ENCODE measurements at regions of chr7 and their contacts with region 1.

Region 1: DNA sequence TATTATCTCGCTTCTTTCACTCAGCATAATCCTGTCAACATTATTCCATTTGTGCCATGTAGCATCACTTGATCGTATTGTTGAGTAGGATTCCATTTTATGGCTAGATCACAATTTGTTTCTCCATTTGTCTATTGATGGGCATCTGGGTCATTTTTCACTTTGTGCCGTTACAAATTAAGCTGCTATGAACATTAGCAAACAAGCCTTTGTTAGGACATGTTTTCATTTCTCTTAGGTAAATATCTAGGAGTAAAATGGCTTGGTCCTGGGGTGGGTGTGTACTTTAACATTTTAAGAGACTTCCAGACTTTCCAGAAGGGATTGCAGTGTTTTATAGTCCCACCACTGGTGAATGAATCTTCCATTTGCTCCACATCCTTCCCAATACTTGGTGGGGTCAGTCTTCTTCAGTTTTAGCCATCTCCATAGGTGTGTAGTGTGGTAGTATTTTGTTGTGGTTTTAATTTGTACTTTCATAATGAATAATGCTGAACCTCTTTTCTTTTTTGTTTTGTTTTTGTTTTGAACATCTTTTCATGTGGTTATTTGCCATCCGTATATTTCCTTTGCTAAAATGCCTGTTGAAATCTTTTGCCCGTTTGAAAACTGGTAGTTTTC is 86.2 kb downstream of the ANKRD61 start:
- DNase-seq: no peak
- ATAC-seq: no peak
- H3K4me3 ChIP-seq: no peak overlapping the region
- H3K4me3 Mint-ChIP-seq: no peak overlapping the region
- H3K27ac ChIP-seq: no peak overlapping the region
- H3K27ac Mint-ChIP-seq: peak overlapping the region; percentile 70 to 79
- H3K4me1 ChIP-seq: no peaks in the 10 kb centered on the region
- H3K4me1 Mint-ChIP-seq: peaks cover 14 to 28% (median 17%) of the 10 kb centered on the region in 3 donors
- H3K27me3 ChIP-seq: no peaks in the 10 kb centered on the region
- H3K27me3 Mint-ChIP-seq: no peaks in the 10 kb centered on the region

Region 2: GRCh38 chr7:6008668-6009611 is 108.5 kb before region 1 on chr7 and contains the starts of genes AIMP2 and PMS2:
- CTCF ChIA-PET with region 1: no interaction called
- POLR2A ChIA-PET with region 1: interaction called in 1 of 2 experiments, 11 read pairs
- DNase-seq: peak; percentile 87 to 97 (median 93)
- ATAC-seq: peak; percentile 85 to 90 (median 88)
- H3K4me3 ChIP-seq: peak within 1 kb of the TSS; percentile 88 to 99
- H3K4me3 Mint-ChIP-seq: peak within 1 kb of the TSS; percentile 90 to 95 (median 92)
- H3K27ac ChIP-seq: peak within 1 kb of the TSS; percentile 83
- H3K27ac Mint-ChIP-seq: peak within 1 kb of the TSS; percentile 86 to 94
- H3K4me1 ChIP-seq: peaks cover 9 to 17% of the 10 kb centered on the region in 2 experiments
- H3K4me1 Mint-ChIP-seq: peaks cover 31 to 46% (median 33%) of the 10 kb centered on the region in 3 donors
- H3K27me3 ChIP-seq: no peaks in the 10 kb centered on the region
- H3K27me3 Mint-ChIP-seq: no peaks in the 10 kb centered on the region
- total RNA-seq, gene AIMP2: 7.8 to 17.4 (median 14.1) TPM
- total RNA-seq, gene PMS2: 13.5 to 21.0 (median 20.0) TPM

Region 3: DNA sequence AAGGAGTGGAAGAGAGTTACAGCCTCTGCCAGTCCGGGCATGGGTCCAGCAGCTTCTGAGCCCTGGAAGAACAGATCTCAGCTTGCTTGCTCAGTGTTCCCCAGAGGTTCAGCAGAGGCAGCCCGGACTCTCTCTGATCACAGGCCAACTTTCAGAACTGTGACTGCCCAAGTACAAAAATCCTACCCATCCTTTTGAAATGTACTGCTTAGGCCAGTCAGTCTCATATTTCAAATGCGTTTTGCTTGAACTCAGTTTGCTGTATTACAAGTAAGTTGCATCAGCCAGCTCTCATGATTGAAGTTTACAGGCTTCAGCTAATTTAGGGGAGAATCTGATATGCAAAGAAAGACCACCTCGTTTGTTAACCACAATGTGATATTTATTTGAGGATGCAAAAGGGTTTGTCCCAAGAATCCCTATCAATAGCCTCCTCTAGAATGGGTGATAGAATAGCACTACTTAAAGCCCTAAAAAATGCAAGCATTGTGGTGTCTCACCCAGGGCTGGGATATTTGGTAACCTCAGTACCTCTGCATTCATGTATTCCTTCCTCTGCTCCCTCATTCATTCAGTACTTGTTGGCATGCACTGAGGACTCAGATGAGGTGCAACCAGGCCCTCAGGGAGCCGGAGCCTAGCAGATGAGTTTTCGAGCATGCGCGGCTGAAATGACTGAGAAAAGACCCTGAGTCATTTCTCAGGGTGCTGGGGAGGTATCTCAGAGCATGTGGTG is 101.3 kb before region 1 on chr7:
- CTCF ChIA-PET with region 1: interaction called in 1 of 2 experiments, 10 read pairs
- POLR2A ChIA-PET with region 1: no interaction called
- DNase-seq: no peak
- ATAC-seq: no peak
- H3K4me3 ChIP-seq: no peak overlapping the region
- H3K4me3 Mint-ChIP-seq: no peak overlapping the region
- H3K27ac ChIP-seq: no peak overlapping the region
- H3K27ac Mint-ChIP-seq: peak overlapping the region in 1 of 2 donors; percentile 44
- H3K4me1 ChIP-seq: no peaks in the 10 kb centered on the region
- H3K4me1 Mint-ChIP-seq: peaks cover 11 to 18% (median 14%) of the 10 kb centered on the region in 3 donors
- H3K27me3 ChIP-seq: no peaks in the 10 kb centered on the region
- H3K27me3 Mint-ChIP-seq: no peaks in the 10 kb centered on the region

Region 4: DNA sequence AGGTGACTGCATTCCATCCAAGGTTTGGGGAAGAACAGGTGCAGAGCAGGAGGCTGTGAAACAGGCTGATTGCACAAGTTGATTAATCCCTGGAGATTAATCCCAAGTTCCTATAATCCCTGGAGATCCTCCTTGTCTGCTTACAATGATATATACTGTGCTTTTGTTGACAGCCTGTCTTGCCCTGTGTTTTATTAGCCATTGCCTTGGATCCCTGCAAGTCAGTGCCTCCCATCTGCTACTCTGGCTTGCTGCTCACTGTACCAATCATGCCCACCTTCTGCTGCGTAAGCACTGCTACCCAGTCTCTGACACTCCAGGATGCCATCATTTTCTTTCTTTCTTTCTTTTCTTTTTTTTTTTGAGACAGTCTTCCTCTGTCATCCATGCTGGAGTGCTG is 20.8 kb before region 1 on chr7:
- CTCF ChIA-PET with region 1: no interaction called
- POLR2A ChIA-PET with region 1: interaction called in 1 of 2 experiments, 14 read pairs
- DNase-seq: no peak
- ATAC-seq: no peak
- H3K4me3 ChIP-seq: no peak overlapping the region
- H3K4me3 Mint-ChIP-seq: no peak overlapping the region
- H3K27ac ChIP-seq: no peak overlapping the region
- H3K27ac Mint-ChIP-seq: no peak overlapping the region
- H3K4me1 ChIP-seq: no peaks in the 10 kb centered on the region
- H3K4me1 Mint-ChIP-seq: no peaks in the 10 kb centered on the region
- H3K27me3 ChIP-seq: peaks cover 0 to 27% of the 10 kb centered on the region in 2 experiments
- H3K27me3 Mint-ChIP-seq: peaks cover 19 to 32% of the 10 kb centered on the region in 2 donors

Region 5: DNA sequence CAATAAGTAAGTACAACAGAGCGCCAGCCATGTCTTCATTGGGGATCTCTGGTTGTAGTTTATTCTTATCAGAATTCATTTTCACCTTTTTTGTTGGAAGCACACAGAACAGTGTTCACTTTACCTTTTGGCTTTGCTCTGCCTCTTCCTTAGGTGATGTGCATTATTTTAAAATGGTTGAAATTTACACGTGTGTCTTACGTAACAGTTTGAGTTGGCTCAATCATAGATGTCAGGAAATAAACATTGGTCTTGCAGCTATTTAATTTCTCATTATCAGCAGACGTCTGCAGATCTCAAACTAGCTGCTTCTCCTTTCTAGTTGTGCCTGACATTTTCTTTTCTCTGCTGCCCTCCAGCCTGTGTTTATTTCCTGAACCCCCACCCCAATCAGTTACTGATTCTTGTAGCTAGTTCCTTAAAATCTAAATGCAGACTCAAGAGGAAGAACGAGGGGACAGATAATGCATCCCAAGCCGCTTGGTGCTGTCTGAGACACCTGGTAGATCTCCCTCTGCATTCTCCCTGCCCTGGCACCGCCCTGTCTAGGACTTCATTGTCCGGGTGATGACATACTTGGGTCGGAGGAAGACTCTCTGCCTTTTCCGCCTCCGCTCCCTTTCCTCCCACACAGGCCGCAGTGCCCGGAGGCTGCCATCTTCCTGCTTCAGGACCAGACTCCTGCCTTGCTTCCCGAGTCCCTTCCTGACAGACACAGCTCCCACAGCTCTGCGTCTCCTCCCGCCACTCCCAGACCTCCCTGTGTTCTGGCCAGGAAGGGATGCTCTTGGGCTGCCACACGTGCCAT is 22.0 kb after region 1 on chr7:
- CTCF ChIA-PET with region 1: no interaction called
- POLR2A ChIA-PET with region 1: interaction called in 1 of 2 experiments, 11 read pairs
- DNase-seq: no peak
- ATAC-seq: no peak
- H3K4me3 ChIP-seq: no peak overlapping the region
- H3K4me3 Mint-ChIP-seq: no peak overlapping the region
- H3K27ac ChIP-seq: no peak overlapping the region
- H3K27ac Mint-ChIP-seq: peak overlapping the region in 1 of 2 donors; percentile 17
- H3K4me1 ChIP-seq: no peaks in the 10 kb centered on the region
- H3K4me1 Mint-ChIP-seq: peaks cover 0 to 6% (median 2%) of the 10 kb centered on the region in 3 donors
- H3K27me3 ChIP-seq: no peaks in the 10 kb centered on the region
- H3K27me3 Mint-ChIP-seq: no peaks in the 10 kb centered on the region

Region 6: GRCh38 chr7:6228361-6229229 is 111.2 kb after region 1 on chr7:
- CTCF ChIA-PET with region 1: no interaction called
- POLR2A ChIA-PET with region 1: no interaction called
- DNase-seq: peak in 1 of 35 experiments; percentile 7
- ATAC-seq: peak in 2 of 4 experiments; percentile 42 to 69
- H3K4me3 ChIP-seq: no peak overlapping the region
- H3K4me3 Mint-ChIP-seq: peak overlapping the region in 1 of 3 donors; percentile 26
- H3K27ac ChIP-seq: no peak overlapping the region
- H3K27ac Mint-ChIP-seq: no peak overlapping the region
- H3K4me1 ChIP-seq: peaks cover 0 to 10% of the 10 kb centered on the region in 2 experiments
- H3K4me1 Mint-ChIP-seq: peaks cover 34 to 45% (median 37%) of the 10 kb centered on the region in 3 donors
- H3K27me3 ChIP-seq: peaks cover 0 to 8% of the 10 kb centered on the region in 2 experiments
- H3K27me3 Mint-ChIP-seq: no peaks in the 10 kb centered on the region

Region 7: GRCh38 chr7:6606866-6607583 is 489.6 kb after region 1 on chr7:
- CTCF ChIA-PET with region 1: no interaction called
- POLR2A ChIA-PET with region 1: no interaction called
- DNase-seq: no peak
- ATAC-seq: no peak
- H3K4me3 ChIP-seq: no peak overlapping the region
- H3K4me3 Mint-ChIP-seq: no peak overlapping the region
- H3K27ac ChIP-seq: no peak overlapping the region
- H3K27ac Mint-ChIP-seq: no peak overlapping the region
- H3K4me1 ChIP-seq: peaks cover 0 to 8% of the 10 kb centered on the region in 2 experiments
- H3K4me1 Mint-ChIP-seq: peaks cover 2 to 20% (median 5%) of the 10 kb centered on the region in 3 donors
- H3K27me3 ChIP-seq: no peaks in the 10 kb centered on the region
- H3K27me3 Mint-ChIP-seq: no peaks in the 10 kb centered on the region